Body of pancreas (tissue), 4 donors: ENCODE measurements at regions of chr20 and their contacts with region 1.

Region 1: DNA sequence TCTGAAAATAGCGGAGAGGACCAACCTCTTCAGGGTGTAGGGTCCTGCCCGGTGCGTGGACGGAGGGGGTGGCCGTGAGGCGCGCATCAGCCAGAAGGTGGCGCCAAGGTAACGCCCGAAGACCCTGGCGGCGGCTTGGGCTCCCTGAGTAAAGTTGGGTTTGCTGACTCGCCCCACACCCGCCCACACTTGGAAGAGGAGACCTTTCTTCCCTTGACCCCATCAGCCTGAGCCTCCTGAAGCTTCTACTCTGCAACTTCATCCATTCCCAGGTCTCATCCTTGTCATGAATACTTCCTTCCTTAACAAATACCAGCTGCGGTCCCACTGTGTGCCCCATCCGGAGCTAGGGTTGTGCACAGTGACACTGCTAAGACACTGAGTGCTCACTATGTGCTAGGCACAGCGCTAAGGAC is 14.6 kb downstream of the CD40 start:
- DNase-seq: peak; percentile 74 to 82 (median 76)
- ATAC-seq: peak; percentile 79
- H3K4me3 ChIP-seq: no peak overlapping the region
- H3K27ac ChIP-seq: no peak overlapping the region
- H3K4me1 ChIP-seq: peaks cover 6% of the 10 kb centered on the region
- H3K27me3 ChIP-seq: no peaks in the 10 kb centered on the region
- CTCF ChIP-seq: peak; percentile 67 to 91 (median 83)
- POLR2A ChIP-seq: no peak

Region 2: DNA sequence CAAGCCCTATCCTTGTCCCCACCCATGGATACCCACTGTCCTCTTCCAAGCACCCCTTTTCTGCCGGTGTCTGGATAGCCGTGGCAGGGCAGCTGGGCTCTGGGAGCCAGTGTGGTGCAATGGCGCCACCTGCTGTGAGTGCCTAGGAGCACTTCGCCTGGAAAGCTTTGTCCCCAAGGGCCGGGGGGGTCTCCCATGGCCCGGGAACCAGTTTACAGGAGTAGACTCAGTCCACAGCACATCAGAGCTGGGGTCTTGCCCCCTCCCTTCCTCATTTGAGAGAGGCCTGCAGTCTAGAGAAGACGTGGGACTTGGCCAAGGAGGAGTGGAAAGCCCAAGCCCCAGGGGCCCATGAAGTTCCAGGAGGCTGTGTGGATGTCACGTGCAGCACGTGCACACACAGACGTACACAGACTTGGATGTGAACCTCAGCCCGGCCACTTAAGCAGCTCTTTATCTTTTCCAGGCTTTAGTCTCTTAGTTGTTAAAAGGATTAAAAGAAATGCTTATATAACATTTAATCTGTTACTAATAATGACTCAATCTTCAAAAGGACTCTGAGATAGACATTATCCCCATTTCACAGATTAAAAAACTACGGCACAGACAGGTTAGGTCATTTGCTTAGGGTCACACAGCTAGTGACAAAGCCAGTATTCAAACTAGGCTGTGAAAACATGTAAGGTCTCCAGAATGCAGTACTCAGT is 216.5 kb after region 1 on chr20:
- intact Hi-C with region 1: loop called (anchors 5 kb)
- DNase-seq: peak; percentile 56 to 72 (median 68)
- ATAC-seq: peak; percentile 55
- H3K4me3 ChIP-seq: no peak overlapping the region
- H3K27ac ChIP-seq: no peak overlapping the region
- H3K4me1 ChIP-seq: peaks cover 8% of the 10 kb centered on the region
- H3K27me3 ChIP-seq: peaks cover 0 to 5% of the 10 kb centered on the region in 2 donors
- CTCF ChIP-seq: peak; percentile 61 to 83 (median 78)
- POLR2A ChIP-seq: no peak